ENCODE measurements at regions of chr4 and their contacts with region 1.

Region 1: GRCh38 chr4:147866532-147867271 is 134.8 kb downstream of the ARHGAP10 start:
- H3K4me3 Mint-ChIP-seq: no peak overlapping the region
- H3K27ac Mint-ChIP-seq: peak overlapping the region; percentile 72
- H3K4me1 Mint-ChIP-seq: peaks cover 46% of the 10 kb centered on the region
- H3K27me3 Mint-ChIP-seq: no peaks in the 10 kb centered on the region

Region 2: GRCh38 chr4:147518846-147519767 is 347.6 kb before region 1 on chr4:
- intact Hi-C with region 1: no loop called
- H3K4me3 Mint-ChIP-seq: no peak overlapping the region
- H3K27ac Mint-ChIP-seq: no peak overlapping the region
- H3K4me1 Mint-ChIP-seq: no peaks in the 10 kb centered on the region
- H3K27me3 Mint-ChIP-seq: peaks cover 1% of the 10 kb centered on the region

Region 3: DNA sequence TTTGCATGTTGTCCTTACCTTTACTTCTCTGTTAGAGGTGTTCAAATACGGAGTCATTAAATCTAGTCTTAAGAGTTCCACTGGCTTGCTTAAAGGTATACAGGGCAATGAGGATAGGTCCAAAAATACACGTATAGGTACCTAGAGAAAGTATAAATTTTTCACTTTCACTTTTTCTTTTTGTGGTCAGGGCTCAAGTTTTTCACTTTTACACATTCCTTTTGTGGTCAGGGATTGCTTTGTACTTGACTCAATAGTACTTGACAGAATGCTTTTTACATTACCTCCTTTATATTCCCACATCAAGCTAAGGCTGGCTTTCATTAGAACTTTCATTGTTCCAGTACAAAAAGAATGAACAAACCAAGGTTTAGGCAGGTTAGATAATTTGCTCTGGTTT is 227.8 kb before region 1 on chr4:
- intact Hi-C with region 1: loop called (anchors 10 kb)
- H3K4me3 Mint-ChIP-seq: no peak overlapping the region
- H3K27ac Mint-ChIP-seq: no peak overlapping the region
- H3K4me1 Mint-ChIP-seq: no peaks in the 10 kb centered on the region
- H3K27me3 Mint-ChIP-seq: no peaks in the 10 kb centered on the region

Region 4: DNA sequence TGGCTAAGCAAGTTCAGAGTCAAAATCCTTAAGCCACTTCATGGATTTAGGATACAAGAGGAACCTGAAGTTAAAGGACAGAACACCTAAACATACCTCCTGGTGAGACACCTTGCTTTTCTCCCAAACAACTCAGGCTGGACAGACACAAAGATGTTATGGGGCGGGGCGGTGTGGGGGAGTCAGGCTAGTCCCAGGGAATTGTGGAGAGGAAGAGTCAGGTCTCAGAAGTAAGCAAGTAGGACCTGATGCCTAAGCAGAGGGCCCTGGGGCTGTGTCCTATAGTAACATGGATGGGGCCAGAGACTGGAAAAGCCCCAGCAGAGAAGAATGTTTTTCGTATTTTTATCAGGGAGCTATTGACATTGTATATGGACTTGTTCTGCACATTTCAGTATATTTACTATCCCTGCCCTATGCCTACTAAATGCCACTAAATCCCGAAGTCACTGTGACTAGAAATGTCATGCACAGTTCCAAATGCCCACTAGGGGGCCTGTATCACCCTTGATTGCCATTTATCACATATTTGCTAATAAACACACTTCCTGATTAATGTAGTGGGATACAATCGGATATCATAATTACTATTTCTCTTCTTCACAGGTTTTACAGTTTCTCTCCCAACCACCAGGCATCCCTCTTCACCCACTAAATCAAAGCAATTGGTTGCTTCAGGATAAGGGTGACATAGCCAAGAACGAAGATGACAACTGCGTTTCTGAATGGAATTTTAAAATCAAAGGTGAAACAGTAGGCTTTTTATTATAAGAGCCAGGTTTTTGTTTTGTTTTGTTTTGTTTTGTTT is 158.6 kb before region 1 on chr4:
- intact Hi-C with region 1: loop called (anchors 1 kb)
- H3K4me3 Mint-ChIP-seq: no peak overlapping the region
- H3K27ac Mint-ChIP-seq: no peak overlapping the region
- H3K4me1 Mint-ChIP-seq: peaks cover 23% of the 10 kb centered on the region
- H3K27me3 Mint-ChIP-seq: peaks cover 3% of the 10 kb centered on the region